Naive thymus-derived CD8-positive, alpha-beta T cell (primary cell): ENCODE measurements at regions of chr12 and their contacts with region 1.

Region 1: GRCh38 chr12:9797722-9798619 is 29.3 kb upstream of the KLRF1 start:
- DNase-seq: peak; percentile 18 to 89 (median 68)
- ATAC-seq: peak; percentile 97
- H3K4me3 Mint-ChIP-seq: peak overlapping the region in 1 of 10 donors; percentile 37
- H3K27ac Mint-ChIP-seq: peak overlapping the region in 4 of 10 donors; percentile 11 to 52 (median 36)
- H3K4me1 Mint-ChIP-seq: peaks cover 20 to 50% (median 43%) of the 10 kb centered on the region in 4 donors
- H3K27me3 Mint-ChIP-seq: no peaks in the 10 kb centered on the region

Region 2: DNA sequence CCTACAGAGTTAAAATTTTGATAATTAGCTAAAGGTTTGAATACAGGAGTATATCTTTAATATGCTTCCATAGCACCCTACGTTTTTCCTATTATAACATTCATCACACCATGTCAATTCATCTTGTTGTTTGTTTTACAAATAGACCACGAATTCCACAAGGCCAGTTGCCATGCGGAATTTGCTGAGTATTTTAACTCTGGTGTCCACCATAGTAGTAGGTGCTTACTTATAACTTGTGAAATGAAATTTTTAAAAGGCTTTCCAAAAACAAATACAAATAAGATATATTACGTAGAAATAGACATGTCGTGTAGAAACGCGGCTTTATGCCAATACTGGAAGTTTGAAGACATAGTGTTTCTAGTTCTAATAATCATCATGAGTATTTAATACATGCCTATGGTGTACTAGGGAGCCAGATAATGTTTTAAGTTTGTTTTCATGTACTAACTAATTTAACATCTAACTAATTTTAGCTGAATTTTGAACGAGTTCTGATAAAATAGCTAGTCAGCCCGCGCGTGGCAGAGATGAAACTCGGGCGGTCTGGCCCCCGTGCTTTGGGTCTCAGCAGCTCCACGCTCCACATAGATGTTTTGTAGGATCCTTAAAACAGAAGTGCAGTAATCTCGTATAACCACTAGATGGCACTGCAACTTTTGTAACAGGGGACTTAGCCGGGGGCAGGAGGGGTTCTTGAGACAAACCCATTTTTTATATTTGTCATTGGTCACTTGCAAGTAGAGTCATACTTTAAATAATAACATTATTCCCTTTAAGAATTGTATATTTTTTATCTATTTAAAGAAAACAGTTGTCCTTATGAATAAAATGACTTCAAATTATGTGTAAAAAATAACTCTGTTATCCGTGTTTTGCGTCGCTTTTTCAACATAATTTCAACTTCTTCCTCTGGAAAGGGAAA is 47.4 kb before region 1 on chr12:
- POLR2A ChIA-PET with region 1: interaction called, 71 read pairs
- DNase-seq: peak; percentile 23 to 83 (median 59)
- ATAC-seq: peak; percentile 47 to 53
- H3K4me3 Mint-ChIP-seq: peak overlapping the region in 8 of 10 donors; percentile 57 to 81 (median 75)
- H3K27ac Mint-ChIP-seq: peak overlapping the region in 9 of 10 donors; percentile 39 to 97 (median 82)
- H3K4me1 Mint-ChIP-seq: peaks cover 14 to 44% (median 40%) of the 10 kb centered on the region in 4 donors
- H3K27me3 Mint-ChIP-seq: no peaks in the 10 kb centered on the region